ENCODE measurements at regions of chr1 and their contacts with region 1.

Region 1: GRCh38 chr1:22861764-22862440 is 110.8 kb downstream of the LACTBL1 start:
- DNase-seq: peak; percentile 58
- ATAC-seq: peak; percentile 81
- H3K4me3 Mint-ChIP-seq: no peak overlapping the region
- H3K27ac Mint-ChIP-seq: no peak overlapping the region
- H3K4me1 Mint-ChIP-seq: no peaks in the 10 kb centered on the region
- H3K27me3 Mint-ChIP-seq: no peaks in the 10 kb centered on the region
- CTCF ChIP-seq: peak; percentile 87

Region 2: GRCh38 chr1:22704440-22705067 is 157.3 kb before region 1 on chr1:
- CTCF ChIA-PET with region 1: interaction called, 38 read pairs
- POLR2A ChIA-PET with region 1: no interaction called
- DNase-seq: peak; percentile 86
- ATAC-seq: peak; percentile 95
- H3K4me3 Mint-ChIP-seq: no peak overlapping the region
- H3K27ac Mint-ChIP-seq: no peak overlapping the region
- H3K4me1 Mint-ChIP-seq: 0 out of 2 replicates have a peak, but pooled peaks cover 7% of the 10 kb centered on the region
- H3K27me3 Mint-ChIP-seq: peaks cover 7% of the 10 kb centered on the region
- CTCF ChIP-seq: peak; percentile 81

Region 3: GRCh38 chr1:22749919-22750688 is 111.8 kb before region 1 on chr1:
- CTCF ChIA-PET with region 1: interaction called, 24 read pairs
- POLR2A ChIA-PET with region 1: no interaction called
- DNase-seq: no peak
- ATAC-seq: no peak
- H3K4me3 Mint-ChIP-seq: no peak overlapping the region
- H3K27ac Mint-ChIP-seq: no peak overlapping the region
- H3K4me1 Mint-ChIP-seq: 0 out of 2 replicates have a peak, but pooled peaks cover 4% of the 10 kb centered on the region
- H3K27me3 Mint-ChIP-seq: no peaks in the 10 kb centered on the region
- CTCF ChIP-seq: no peak

Region 4: DNA sequence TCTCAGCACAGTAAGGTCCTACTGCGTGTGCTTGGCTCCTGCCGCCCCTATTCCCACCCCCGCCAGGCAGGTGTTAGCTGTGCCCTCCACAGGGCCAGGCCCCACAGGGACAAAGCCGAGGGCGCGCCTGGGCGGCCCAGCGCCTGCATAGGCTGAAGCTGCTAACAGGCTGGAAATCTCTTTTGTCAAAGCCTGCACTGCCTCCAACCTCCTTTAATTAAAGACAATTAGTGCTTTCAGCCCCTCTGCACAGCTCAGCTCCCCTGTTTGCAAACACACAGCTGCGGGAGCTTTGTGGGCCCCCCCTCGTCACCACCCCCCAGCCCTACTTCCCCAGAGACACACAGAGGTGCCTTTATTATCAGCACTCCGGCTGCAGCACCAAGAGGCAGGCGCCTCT is 55.3 kb before region 1 on chr1:
- CTCF ChIA-PET with region 1: interaction called, 25 read pairs
- POLR2A ChIA-PET with region 1: no interaction called
- DNase-seq: no peak
- ATAC-seq: 0 out of 2 replicates have a peak, but pooled peaks have one; percentile 9
- H3K4me3 Mint-ChIP-seq: no peak overlapping the region
- H3K27ac Mint-ChIP-seq: no peak overlapping the region
- H3K4me1 Mint-ChIP-seq: peaks cover 33% of the 10 kb centered on the region
- H3K27me3 Mint-ChIP-seq: no peaks in the 10 kb centered on the region
- CTCF ChIP-seq: no peak

Region 5: DNA sequence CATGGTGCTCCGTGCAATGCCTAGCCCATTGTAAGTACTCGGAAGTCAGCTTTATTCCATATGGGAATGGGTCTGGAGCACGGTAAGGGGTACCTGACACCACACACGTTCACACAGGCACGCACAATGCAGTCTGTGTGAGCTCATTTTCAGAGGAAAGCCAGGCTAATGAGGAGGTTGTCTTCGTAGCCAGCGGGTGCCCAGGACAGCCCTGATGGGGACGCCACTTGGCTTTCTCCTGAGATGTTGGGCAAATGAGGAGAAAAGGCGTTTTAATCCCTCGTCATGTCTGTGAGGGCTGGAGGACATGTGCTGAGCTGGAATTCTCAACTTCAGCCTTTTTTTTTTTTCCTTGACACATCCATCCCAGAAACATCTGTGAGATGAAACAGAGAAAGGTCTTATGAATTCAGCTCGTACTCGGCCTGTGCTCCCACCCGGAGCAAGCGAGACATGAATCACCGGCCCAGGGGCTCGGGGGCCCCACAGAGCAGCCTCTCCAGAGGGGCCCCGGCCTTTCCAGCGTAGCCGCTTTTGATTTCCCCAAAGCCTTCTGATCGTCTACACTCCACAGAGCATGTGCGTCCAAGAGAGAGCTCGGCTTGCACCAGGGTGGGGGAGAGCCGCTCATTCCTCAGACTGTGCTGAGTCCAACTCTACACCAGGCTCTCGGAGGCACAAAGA is 26.1 kb before region 1 on chr1:
- CTCF ChIA-PET with region 1: interaction called, 12 read pairs
- POLR2A ChIA-PET with region 1: no interaction called
- DNase-seq: no peak
- ATAC-seq: no peak
- H3K4me3 Mint-ChIP-seq: no peak overlapping the region
- H3K27ac Mint-ChIP-seq: no peak overlapping the region
- H3K4me1 Mint-ChIP-seq: peaks cover 16% of the 10 kb centered on the region
- H3K27me3 Mint-ChIP-seq: no peaks in the 10 kb centered on the region
- CTCF ChIP-seq: no peak

Region 6: GRCh38 chr1:22876359-22877111 is 14.6 kb after region 1 on chr1:
- CTCF ChIA-PET with region 1: interaction called, 32 read pairs
- POLR2A ChIA-PET with region 1: no interaction called
- DNase-seq: no peak
- ATAC-seq: peak; percentile 29
- H3K4me3 Mint-ChIP-seq: no peak overlapping the region
- H3K27ac Mint-ChIP-seq: no peak overlapping the region
- H3K4me1 Mint-ChIP-seq: peaks cover 6% of the 10 kb centered on the region
- H3K27me3 Mint-ChIP-seq: no peaks in the 10 kb centered on the region
- CTCF ChIP-seq: no peak

Region 7: GRCh38 chr1:23224714-23225648 is 363.1 kb after region 1 on chr1:
- CTCF ChIA-PET with region 1: no interaction called
- POLR2A ChIA-PET with region 1: no interaction called
- DNase-seq: no peak
- ATAC-seq: peak; percentile 79
- H3K4me3 Mint-ChIP-seq: no peak overlapping the region
- H3K27ac Mint-ChIP-seq: no peak overlapping the region; the same call in 1 of the 2 replicates
- H3K4me1 Mint-ChIP-seq: peaks cover 21% of the 10 kb centered on the region
- H3K27me3 Mint-ChIP-seq: peaks cover 7% of the 10 kb centered on the region; the same call in 1 of the 2 replicates
- CTCF ChIP-seq: no peak

Measured in WTC11 (cell line).